GM12878 (cell line): ENCODE measurements at regions of chr5 and their contacts with region 1.

Region 1: GRCh38 chr5:172179361-172179989 is 8.5 kb downstream of the STK10 start:
- DNase-seq: peak; percentile 71
- ATAC-seq: peak; percentile 49
- H3K4me3 ChIP-seq: peak overlapping the region; percentile 61
- H3K27ac ChIP-seq: peak overlapping the region; percentile 96
- H3K4me1 ChIP-seq: peaks cover 78% of the 10 kb centered on the region
- H3K27me3 ChIP-seq: no peaks in the 10 kb centered on the region
- CTCF ChIP-seq: no peak
- EP300 ChIP-seq: peak in 1 of 2 experiments; percentile 65; a peak in 3 of 4 replicates
- POLR2A ChIP-seq: peak; percentile 70
- RAD21 ChIP-seq: no peak

Region 2: GRCh38 chr5:172114875-172115422 is 64.5 kb before region 1 on chr5:
- CTCF ChIA-PET with region 1: interaction called, 162 read pairs
- POLR2A ChIA-PET with region 1: interaction called, 115 read pairs
- RAD21 ChIA-PET with region 1: interaction called, 95 read pairs
- SMC1A ChIA-PET with region 1: interaction called, 165 read pairs
- in situ Hi-C with region 1: loop called (anchors 5 kb)
- intact Hi-C with region 1: loop called (anchors 1 kb)
- DNase-seq: peak; percentile 93
- ATAC-seq: peak; percentile 75
- H3K4me3 ChIP-seq: peak overlapping the region; percentile 62; the same call in 1 of the 2 replicates
- H3K27ac ChIP-seq: peak overlapping the region; percentile 95
- H3K4me1 ChIP-seq: peaks cover 43% of the 10 kb centered on the region
- H3K27me3 ChIP-seq: no peaks in the 10 kb centered on the region
- CTCF ChIP-seq: no peak
- EP300 ChIP-seq: peak; percentile 62 to 75
- POLR2A ChIP-seq: peak; percentile 86
- RAD21 ChIP-seq: peak; percentile 23; the same call in 1 of the 2 replicates

Region 3: GRCh38 chr5:172150514-172151425 is 28.7 kb before region 1 on chr5:
- CTCF ChIA-PET with region 1: interaction called, 4 read pairs
- POLR2A ChIA-PET with region 1: interaction called, 19 read pairs
- RAD21 ChIA-PET with region 1: interaction called, 7 read pairs
- SMC1A ChIA-PET with region 1: interaction called, 16 read pairs
- in situ Hi-C with region 1: no loop called
- intact Hi-C with region 1: loop called (anchors 2 kb)
- DNase-seq: no peak
- ATAC-seq: peak; percentile 84
- H3K4me3 ChIP-seq: peak overlapping the region; percentile 50; the same call in 1 of the 2 replicates
- H3K27ac ChIP-seq: peak overlapping the region; percentile 87
- H3K4me1 ChIP-seq: peaks cover 36% of the 10 kb centered on the region
- H3K27me3 ChIP-seq: no peaks in the 10 kb centered on the region
- CTCF ChIP-seq: no peak
- EP300 ChIP-seq: peak in 1 of 2 experiments; percentile 31; a peak in 1 of 4 replicates
- POLR2A ChIP-seq: no peak
- RAD21 ChIP-seq: no peak

Region 4: DNA sequence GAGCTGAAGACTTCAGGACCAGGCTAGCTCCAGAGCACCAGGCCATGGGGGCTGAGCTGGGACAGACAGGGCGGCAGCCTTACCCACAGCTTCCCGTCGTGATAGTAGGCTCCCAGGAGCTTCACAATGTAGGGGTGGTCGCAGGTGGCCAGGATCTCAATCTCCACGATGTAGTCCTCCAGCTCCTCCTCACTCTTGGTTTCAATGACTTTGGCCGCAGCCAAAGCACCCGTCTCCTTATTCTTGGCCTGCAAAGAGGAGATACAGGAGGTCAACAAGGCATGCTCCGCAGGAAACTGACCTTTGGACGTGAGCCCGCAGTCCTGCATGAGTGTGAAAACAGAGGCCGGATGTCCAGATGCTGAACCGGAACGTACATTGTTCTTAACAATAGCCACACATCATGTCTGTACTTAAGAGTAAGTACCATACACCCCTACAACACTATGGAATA is 22.9 kb before region 1 on chr5:
- CTCF ChIA-PET with region 1: interaction called, 5 read pairs
- POLR2A ChIA-PET with region 1: interaction called, 19 read pairs
- RAD21 ChIA-PET with region 1: interaction called, 7 read pairs
- SMC1A ChIA-PET with region 1: interaction called, 29 read pairs
- in situ Hi-C with region 1: no loop called
- intact Hi-C with region 1: loop called (anchors 2 kb)
- DNase-seq: no peak
- ATAC-seq: no peak
- H3K4me3 ChIP-seq: no peak overlapping the region
- H3K27ac ChIP-seq: peak overlapping the region; percentile 39; the same call in 1 of the 2 replicates
- H3K4me1 ChIP-seq: peaks cover 44% of the 10 kb centered on the region
- H3K27me3 ChIP-seq: no peaks in the 10 kb centered on the region
- CTCF ChIP-seq: no peak
- EP300 ChIP-seq: no peak
- POLR2A ChIP-seq: no peak
- RAD21 ChIP-seq: no peak

Region 5: DNA sequence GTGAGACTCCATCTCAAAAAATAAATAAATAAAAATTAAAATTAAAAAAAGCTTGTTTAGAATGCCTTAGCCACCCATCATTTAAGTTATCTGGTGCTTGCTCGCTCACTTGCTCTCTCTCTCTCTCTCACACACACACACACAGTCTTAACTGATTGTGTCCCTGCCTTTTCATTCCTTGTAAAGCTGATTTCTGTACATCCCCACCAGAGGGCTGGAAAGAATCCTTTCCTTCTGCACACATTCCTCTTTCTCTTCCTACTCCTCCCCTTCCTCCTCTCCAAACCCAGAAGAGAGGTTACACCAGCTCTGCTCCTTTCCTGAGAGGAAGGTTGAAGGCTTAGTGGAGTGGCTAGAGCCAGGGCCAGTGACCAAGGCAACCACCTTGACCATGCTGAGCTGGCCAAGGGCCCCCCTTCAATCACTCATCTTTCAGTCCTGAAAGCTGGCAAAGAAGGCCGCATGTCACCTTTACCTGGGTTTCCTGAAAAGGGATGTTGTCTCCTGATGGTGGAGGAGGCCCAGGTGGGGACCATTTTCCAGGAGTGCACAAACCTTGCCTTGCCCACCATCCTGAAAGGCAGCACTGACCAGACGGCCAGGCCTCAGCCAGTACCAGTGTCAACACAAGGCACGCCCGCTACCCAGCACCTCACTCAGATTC is 17.0 kb before region 1 on chr5:
- CTCF ChIA-PET with region 1: interaction called, 5 read pairs
- POLR2A ChIA-PET with region 1: interaction called, 17 read pairs
- RAD21 ChIA-PET with region 1: interaction called, 8 read pairs
- SMC1A ChIA-PET with region 1: interaction called, 29 read pairs
- in situ Hi-C with region 1: no loop called
- intact Hi-C with region 1: no loop called
- DNase-seq: no peak
- ATAC-seq: no peak
- H3K4me3 ChIP-seq: no peak overlapping the region
- H3K27ac ChIP-seq: no peak overlapping the region
- H3K4me1 ChIP-seq: peaks cover 35% of the 10 kb centered on the region
- H3K27me3 ChIP-seq: no peaks in the 10 kb centered on the region
- CTCF ChIP-seq: no peak
- EP300 ChIP-seq: no peak
- POLR2A ChIP-seq: no peak
- RAD21 ChIP-seq: no peak